Natural killer cell (primary cell): ENCODE measurements at regions of chr1 and their contacts with region 1.

Region 1: GRCh38 chr1:41341772-41342562 is 19.3 kb upstream of the FOXO6 start:
- DNase-seq: peak in 1 of 2 donors; percentile 15
- ATAC-seq: peak; percentile 37 to 64 (median 51)
- H3K4me3 ChIP-seq: no peak overlapping the region
- H3K4me3 Mint-ChIP-seq: no peak overlapping the region
- H3K27ac ChIP-seq: peak overlapping the region; percentile 16
- H3K27ac Mint-ChIP-seq: peak overlapping the region in 1 of 2 donors; percentile 21
- H3K4me1 ChIP-seq: peaks cover 17% of the 10 kb centered on the region
- H3K4me1 Mint-ChIP-seq: peaks cover 22 to 24% of the 10 kb centered on the region in 2 donors
- H3K27me3 ChIP-seq: no peaks in the 10 kb centered on the region
- H3K27me3 Mint-ChIP-seq: peaks cover 18 to 40% of the 10 kb centered on the region in 2 donors
- CTCF ChIP-seq: no peak

Region 2: GRCh38 chr1:41394959-41395956 is 53.3 kb after region 1 on chr1:
- intact Hi-C with region 1: loop called (anchors 10 kb)
- DNase-seq: no peak
- ATAC-seq: peak; percentile 55 to 79 (median 74)
- H3K4me3 ChIP-seq: no peak overlapping the region
- H3K4me3 Mint-ChIP-seq: peak overlapping the region; percentile 1
- H3K27ac ChIP-seq: no peak overlapping the region
- H3K27ac Mint-ChIP-seq: peak overlapping the region in 1 of 2 donors; percentile 70
- H3K4me1 ChIP-seq: peaks cover 9% of the 10 kb centered on the region
- H3K4me1 Mint-ChIP-seq: peaks cover 10 to 20% of the 10 kb centered on the region in 2 donors
- H3K27me3 ChIP-seq: no peaks in the 10 kb centered on the region
- H3K27me3 Mint-ChIP-seq: peaks cover 23 to 32% of the 10 kb centered on the region in 2 donors
- CTCF ChIP-seq: no peak